Activated CD4-positive, alpha-beta T cell treated with anti-CD3 and anti-CD28 coated beads for 36 hours (primary cell): ENCODE measurements at regions of chr6 and their contacts with region 1.

Region 1: GRCh38 chr6:131914967-131915751 is 36.0 kb downstream of the CCN2 start:
- DNase-seq: peak; percentile 72
- ATAC-seq: peak; percentile 76
- H3K4me3 Mint-ChIP-seq: no peak overlapping the region
- H3K27ac Mint-ChIP-seq: no peak overlapping the region
- H3K4me1 Mint-ChIP-seq: peaks cover 9% of the 10 kb centered on the region
- H3K27me3 Mint-ChIP-seq: peaks cover 32% of the 10 kb centered on the region

Region 2: DNA sequence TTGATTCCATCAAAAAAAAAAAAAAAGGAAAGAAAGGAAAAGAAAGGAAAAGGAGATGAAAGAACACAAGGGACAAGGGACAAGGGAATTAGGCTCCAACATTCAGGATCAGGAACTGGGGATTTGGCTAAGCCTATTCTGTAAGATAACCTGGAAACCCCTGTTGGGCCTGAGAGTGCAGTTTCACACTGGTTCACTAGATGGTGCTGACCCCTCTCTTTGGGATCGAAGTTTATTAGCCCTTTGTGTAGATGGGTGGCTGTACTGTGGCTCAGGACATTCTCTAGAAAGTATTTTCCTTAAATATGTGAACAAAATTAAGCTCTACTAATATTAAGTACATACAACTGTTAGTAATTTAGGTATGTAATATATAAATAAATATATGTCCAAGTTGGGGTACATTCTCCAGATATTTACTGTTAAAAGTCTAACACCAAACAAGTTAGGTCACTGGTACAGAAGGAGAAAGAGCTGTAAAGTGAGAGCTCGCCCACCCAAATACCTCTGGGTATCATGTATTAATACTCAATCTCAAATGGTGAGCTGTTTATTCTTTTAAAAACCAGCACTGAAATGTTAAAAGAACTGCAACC is 220.2 kb before region 1 on chr6:
- CTCF ChIA-PET with region 1: interaction called, 23 read pairs
- POLR2A ChIA-PET with region 1: no interaction called
- intact Hi-C with region 1: loop called in 1 of 2 experiments (anchors 1 kb)
- DNase-seq: peak; percentile 48
- ATAC-seq: peak; percentile 76
- H3K4me3 Mint-ChIP-seq: no peak overlapping the region
- H3K27ac Mint-ChIP-seq: no peak overlapping the region
- H3K4me1 Mint-ChIP-seq: no peaks in the 10 kb centered on the region
- H3K27me3 Mint-ChIP-seq: no peaks in the 10 kb centered on the region

Region 3: DNA sequence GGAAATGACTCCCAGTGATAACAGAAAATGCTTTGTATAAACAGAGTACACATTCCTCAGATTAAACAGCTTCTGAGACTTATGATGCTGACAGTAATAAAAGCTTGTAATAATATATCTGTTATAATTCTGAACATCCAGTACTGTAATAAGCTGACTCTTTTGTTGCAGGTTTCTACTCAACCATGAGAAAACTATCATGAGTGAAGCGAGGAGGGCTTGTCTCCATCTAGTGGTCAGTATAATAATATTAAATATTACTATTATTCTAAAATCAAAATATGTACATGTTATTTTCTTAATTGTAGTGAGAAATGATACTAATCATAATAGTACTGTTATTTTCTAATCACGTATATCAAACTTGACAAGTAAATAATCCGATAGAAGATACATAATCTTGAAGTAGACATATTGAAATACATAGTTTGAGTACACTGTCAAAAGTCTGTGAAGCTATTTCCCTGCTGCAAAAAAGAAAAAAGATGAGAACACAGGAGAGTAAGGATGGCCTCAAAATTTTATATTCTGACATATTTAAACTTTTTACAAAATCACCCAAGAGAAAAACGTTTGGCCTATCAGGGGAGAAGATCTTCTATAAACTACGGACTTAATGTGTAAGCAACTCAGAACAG is 303.0 kb after region 1 on chr6:
- CTCF ChIA-PET with region 1: interaction called, 9 read pairs
- POLR2A ChIA-PET with region 1: no interaction called
- intact Hi-C with region 1: loop called (anchors 2 to 5 kb)
- DNase-seq: no peak
- ATAC-seq: no peak
- H3K4me3 Mint-ChIP-seq: no peak overlapping the region
- H3K27ac Mint-ChIP-seq: no peak overlapping the region
- H3K4me1 Mint-ChIP-seq: no peaks in the 10 kb centered on the region
- H3K27me3 Mint-ChIP-seq: peaks cover 5% of the 10 kb centered on the region